Sigmoid colon (tissue), 7 donors: ENCODE measurements at regions of chr20 and their contacts with region 1.

Region 1: GRCh38 chr20:47334022-47334551 is 22.4 kb downstream of the ZMYND8 start:
- DNase-seq: no peak
- H3K4me3 ChIP-seq: peak overlapping the region in 1 of 4 donors; percentile 2
- H3K27ac ChIP-seq: peak overlapping the region; percentile 91 to 97 (median 93)
- H3K4me1 ChIP-seq: peaks cover 0 to 100% (median 98%) of the 10 kb centered on the region in 4 donors
- H3K27me3 ChIP-seq: no peaks in the 10 kb centered on the region
- CTCF ChIP-seq: no peak
- EP300 ChIP-seq: peak; percentile 97 to 100 (median 99)
- POLR2A ChIP-seq: no peak

Region 2: DNA sequence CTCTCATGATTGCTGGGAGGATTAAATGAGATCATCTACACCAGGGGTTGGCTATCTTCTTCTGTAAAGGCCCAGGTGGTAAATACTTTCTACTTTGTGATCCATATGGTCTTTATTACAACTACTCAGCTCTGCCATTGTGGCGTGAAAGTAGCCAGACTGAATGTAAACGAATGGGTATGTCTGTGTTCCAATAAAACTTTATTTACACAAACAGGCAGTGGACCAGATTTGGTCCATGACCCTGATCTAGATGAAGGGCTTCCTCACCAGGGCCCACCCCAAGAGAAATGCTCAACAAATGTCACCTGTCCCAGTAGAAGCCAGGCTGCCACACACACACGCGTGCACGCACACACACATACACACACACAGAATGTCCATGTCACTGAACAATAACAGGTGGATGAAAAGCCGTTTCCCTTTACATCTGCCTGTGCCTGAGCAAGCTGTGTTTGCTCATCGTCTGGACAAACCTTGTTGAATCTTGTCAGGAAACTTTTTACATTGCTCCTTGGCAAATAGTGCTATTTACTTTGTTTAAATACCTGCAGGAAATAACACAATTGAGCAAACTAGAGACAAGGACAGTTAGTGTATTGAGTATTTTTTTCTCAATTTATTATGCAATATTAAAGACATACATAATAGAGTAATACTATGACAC is 325.1 kb before region 1 on chr20:
- intact Hi-C with region 1: no loop called
- DNase-seq: no peak
- H3K4me3 ChIP-seq: no peak overlapping the region
- H3K27ac ChIP-seq: no peak overlapping the region
- H3K4me1 ChIP-seq: no peaks in the 10 kb centered on the region
- H3K27me3 ChIP-seq: no peaks in the 10 kb centered on the region
- CTCF ChIP-seq: no peak
- EP300 ChIP-seq: no peak
- POLR2A ChIP-seq: no peak

Region 3: GRCh38 chr20:47220161-47220582 is 113.9 kb before region 1 on chr20:
- intact Hi-C with region 1: no loop called
- DNase-seq: no peak
- H3K4me3 ChIP-seq: no peak overlapping the region
- H3K27ac ChIP-seq: no peak overlapping the region
- H3K4me1 ChIP-seq: peaks cover 0 to 10% (median 0%) of the 10 kb centered on the region in 4 donors
- H3K27me3 ChIP-seq: no peaks in the 10 kb centered on the region
- CTCF ChIP-seq: peak in 1 of 4 experiments; percentile 43
- EP300 ChIP-seq: no peak
- POLR2A ChIP-seq: no peak

Region 4: GRCh38 chr20:47317127-47317895 is 16.8 kb before region 1 on chr20:
- intact Hi-C with region 1: loop called (anchors 2 kb)
- DNase-seq: peak; percentile 95
- H3K4me3 ChIP-seq: peak overlapping the region in 2 of 4 donors; percentile 26 to 30
- H3K27ac ChIP-seq: peak overlapping the region; percentile 94 to 97 (median 96)
- H3K4me1 ChIP-seq: peaks cover 0 to 93% (median 73%) of the 10 kb centered on the region in 4 donors
- H3K27me3 ChIP-seq: no peaks in the 10 kb centered on the region
- CTCF ChIP-seq: no peak
- EP300 ChIP-seq: peak; percentile 92 to 99 (median 96)
- POLR2A ChIP-seq: peak; percentile 36 to 47